Stomach (tissue), 19 donors: ENCODE measurements at regions of chr5 and their contacts with region 1.

Region 1: DNA sequence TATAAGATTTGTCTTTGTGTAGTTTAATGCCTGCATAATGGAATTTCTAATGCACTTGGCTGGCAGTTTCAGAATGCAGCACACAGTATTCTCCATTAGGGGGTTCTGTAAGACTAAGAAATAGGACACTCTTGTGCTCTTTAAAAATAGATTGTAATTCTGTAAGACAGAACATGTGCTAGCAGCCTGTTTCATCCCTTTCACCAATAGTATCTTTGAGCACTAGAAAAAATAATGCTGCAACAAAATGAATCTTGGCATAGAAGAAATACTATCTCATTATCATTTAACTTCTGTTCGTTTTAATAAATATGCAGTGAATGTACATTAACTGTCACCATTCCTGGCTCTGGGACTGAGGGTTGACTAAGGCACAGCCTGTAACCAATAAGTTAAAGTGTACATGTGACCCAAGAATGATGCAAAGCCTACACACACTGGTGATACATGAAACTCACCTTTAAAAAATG is 23.8 kb upstream of the ZNF622 start:
- DNase-seq: peak in 1 of 2 donors; percentile 74
- H3K4me3 ChIP-seq: no peak overlapping the region
- H3K27ac ChIP-seq: no peak overlapping the region
- H3K4me1 ChIP-seq: peaks cover 0 to 48% (median 6%) of the 10 kb centered on the region in 4 donors
- H3K27me3 ChIP-seq: no peaks in the 10 kb centered on the region
- CTCF ChIP-seq: peak in 5 of 7 experiments; percentile 46 to 81 (median 57)
- EP300 ChIP-seq: no peak
- POLR2A ChIP-seq: no peak

Region 2: GRCh38 chr5:16304846-16305245 is 184.5 kb before region 1 on chr5:
- intact Hi-C with region 1: no loop called
- DNase-seq: no peak
- H3K4me3 ChIP-seq: no peak overlapping the region
- H3K27ac ChIP-seq: no peak overlapping the region
- H3K4me1 ChIP-seq: no peaks in the 10 kb centered on the region
- H3K27me3 ChIP-seq: no peaks in the 10 kb centered on the region
- CTCF ChIP-seq: no peak
- EP300 ChIP-seq: no peak
- POLR2A ChIP-seq: no peak

Region 3: DNA sequence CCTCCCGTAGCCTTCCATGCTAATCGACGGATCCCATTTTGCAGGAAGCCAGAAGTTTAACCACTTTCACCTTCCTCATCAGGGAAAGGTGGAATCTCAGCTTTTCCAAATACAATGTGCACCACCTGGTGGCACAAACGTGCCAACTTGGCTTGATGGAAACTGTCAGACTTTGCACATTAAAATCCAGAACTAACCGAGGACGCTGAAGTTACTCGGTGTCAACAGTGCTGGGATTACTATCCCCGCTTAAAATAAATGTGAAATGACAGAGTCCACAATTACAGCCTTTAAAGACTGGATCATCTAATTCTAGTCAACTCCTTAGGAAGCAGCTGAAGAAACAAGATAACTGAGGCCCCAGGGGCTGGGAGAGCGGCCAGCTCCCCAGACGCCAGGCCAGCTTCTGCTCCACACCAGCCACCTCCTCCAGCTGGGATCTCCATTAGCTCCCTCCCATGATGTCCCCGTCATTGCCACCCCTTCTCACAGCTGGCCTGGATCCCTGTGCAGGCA is 177.6 kb after region 1 on chr5:
- intact Hi-C with region 1: loop called (anchors 10 kb)
- DNase-seq: peak; percentile 54 to 59
- H3K4me3 ChIP-seq: no peak overlapping the region
- H3K27ac ChIP-seq: peak overlapping the region in 1 of 5 donors; percentile 7
- H3K4me1 ChIP-seq: peaks cover 8 to 35% (median 19%) of the 10 kb centered on the region in 4 donors
- H3K27me3 ChIP-seq: no peaks in the 10 kb centered on the region
- CTCF ChIP-seq: peak in 4 of 7 experiments; percentile 36 to 66 (median 46)
- EP300 ChIP-seq: no peak
- POLR2A ChIP-seq: no peak

Region 4: GRCh38 chr5:17189381-17190036 is 700.2 kb after region 1 on chr5:
- intact Hi-C with region 1: loop called (anchors 10 kb)
- DNase-seq: peak; percentile 87 to 90
- H3K4me3 ChIP-seq: no peak overlapping the region
- H3K27ac ChIP-seq: peak overlapping the region in 4 of 5 donors; percentile 3 to 56 (median 18)
- H3K4me1 ChIP-seq: peaks cover 8 to 49% (median 22%) of the 10 kb centered on the region in 4 donors
- H3K27me3 ChIP-seq: no peaks in the 10 kb centered on the region
- CTCF ChIP-seq: peak in 5 of 7 experiments; percentile 57 to 87 (median 79)
- EP300 ChIP-seq: no peak
- POLR2A ChIP-seq: no peak